Naive thymus-derived CD8-positive, alpha-beta T cell (primary cell): ENCODE measurements at regions of chr6 and their contacts with region 1.

Region 1: GRCh38 chr6:52284460-52285176 is at the start of gene MCM3:
- DNase-seq: peak; percentile 79 to 98 (median 95)
- ATAC-seq: peak; percentile 94
- H3K4me3 Mint-ChIP-seq: peak within 1 kb of the TSS in 6 of 10 donors; percentile 27 to 72 (median 62)
- H3K27ac Mint-ChIP-seq: peak within 1 kb of the TSS in 4 of 10 donors; percentile 19 to 65 (median 46)
- H3K4me1 Mint-ChIP-seq: peaks cover 12 to 46% (median 35%) of the 10 kb centered on the region in 4 donors
- H3K27me3 Mint-ChIP-seq: no peaks in the 10 kb centered on the region
- polyA plus RNA-seq, gene MCM3: 45.5 to 63.5 (median 57.7) TPM

Region 2: DNA sequence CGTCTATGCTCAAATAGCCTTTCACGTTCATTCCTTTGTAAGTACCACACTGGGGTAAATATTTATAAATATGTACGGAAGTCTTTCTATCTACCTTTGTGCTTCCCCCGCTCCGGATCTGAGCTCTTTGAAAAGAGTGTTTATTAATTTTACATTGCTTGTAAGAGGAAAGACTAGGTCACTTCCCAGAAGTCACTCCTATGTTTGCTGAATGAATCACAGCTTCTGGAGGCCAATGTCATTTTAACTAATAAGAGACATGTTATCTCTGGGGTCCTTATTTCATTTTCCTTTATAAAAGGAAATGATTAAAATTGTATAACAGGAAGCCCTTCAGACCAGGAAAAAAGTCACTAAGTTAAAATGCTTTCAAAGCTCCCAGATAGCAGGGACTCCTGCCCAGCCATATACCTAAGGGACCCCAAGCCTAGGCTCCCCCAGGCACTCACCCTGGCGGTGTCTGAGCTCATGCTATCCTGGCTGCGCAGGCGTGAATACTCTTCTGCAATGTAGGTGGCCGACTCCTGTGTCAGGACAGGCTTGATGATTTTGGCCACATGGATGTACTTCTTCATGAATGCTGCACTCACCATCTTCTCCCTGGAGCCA is 12.7 kb before region 1 on chr6:
- POLR2A ChIA-PET with region 1: no interaction called
- DNase-seq: no peak
- ATAC-seq: no peak
- H3K4me3 Mint-ChIP-seq: no peak overlapping the region
- H3K27ac Mint-ChIP-seq: peak overlapping the region in 2 of 10 donors; percentile 13 to 24
- H3K4me1 Mint-ChIP-seq: peaks cover 0 to 11% (median 4%) of the 10 kb centered on the region in 4 donors
- H3K27me3 Mint-ChIP-seq: no peaks in the 10 kb centered on the region

Region 3: DNA sequence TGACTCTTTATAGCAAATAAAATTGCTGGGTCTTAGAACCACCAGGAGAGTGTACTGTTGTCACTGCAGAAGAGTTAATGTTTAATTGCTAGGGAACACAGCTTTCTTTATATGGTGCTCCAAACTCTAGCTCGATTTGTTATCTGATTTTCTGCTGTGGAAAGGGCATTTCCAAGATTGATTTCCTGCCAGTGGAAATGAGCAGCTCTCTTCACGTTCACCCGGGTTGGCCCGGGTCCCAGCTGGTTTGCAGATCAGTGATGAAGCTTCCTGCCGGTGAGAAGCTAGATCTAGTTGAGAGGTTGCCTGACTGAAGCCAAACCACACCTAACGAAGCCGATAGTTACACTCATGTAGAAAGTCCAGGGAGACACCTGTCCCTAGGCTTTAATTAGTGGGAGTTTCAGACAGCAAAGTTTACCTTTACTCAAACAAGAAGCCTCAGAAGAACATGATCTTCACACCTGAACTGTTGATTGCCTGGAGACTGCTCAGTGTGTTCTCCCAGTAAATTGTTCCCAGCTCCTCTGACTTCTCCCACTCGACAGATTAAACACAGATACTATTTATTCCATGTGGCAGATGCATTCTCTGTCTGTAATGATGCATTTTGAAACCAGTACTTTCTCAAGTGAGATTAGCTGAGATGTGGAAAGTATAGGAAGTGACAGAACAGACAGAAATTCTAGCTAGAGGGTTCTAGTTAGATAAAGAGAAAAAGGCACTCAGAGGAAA is 105.2 kb after region 1 on chr6:
- POLR2A ChIA-PET with region 1: interaction called, 38 read pairs
- DNase-seq: peak; percentile 41 to 80 (median 65)
- ATAC-seq: peak; percentile 47 to 59
- H3K4me3 Mint-ChIP-seq: peak overlapping the region; percentile 71 to 93 (median 86)
- H3K27ac Mint-ChIP-seq: peak overlapping the region; percentile 93 to 100 (median 97)
- H3K4me1 Mint-ChIP-seq: peaks cover 51 to 93% (median 92%) of the 10 kb centered on the region in 4 donors
- H3K27me3 Mint-ChIP-seq: no peaks in the 10 kb centered on the region

Region 4: GRCh38 chr6:52399511-52400312 is 115.1 kb after region 1 on chr6:
- POLR2A ChIA-PET with region 1: interaction called, 108 read pairs
- DNase-seq: peak in 5 of 10 donors; percentile 39 to 64 (median 54)
- ATAC-seq: peak; percentile 24 to 27
- H3K4me3 Mint-ChIP-seq: peak overlapping the region; percentile 42 to 83 (median 68)
- H3K27ac Mint-ChIP-seq: peak overlapping the region; percentile 93 to 100 (median 96)
- H3K4me1 Mint-ChIP-seq: peaks cover 49 to 86% (median 72%) of the 10 kb centered on the region in 4 donors
- H3K27me3 Mint-ChIP-seq: no peaks in the 10 kb centered on the region

Region 5: GRCh38 chr6:52419809-52420670 is 135.4 kb after region 1 on chr6 and contains the start of gene EFHC1:
- POLR2A ChIA-PET with region 1: interaction called, 10 read pairs
- DNase-seq: peak; percentile 96 to 99 (median 98)
- ATAC-seq: peak; percentile 90
- H3K4me3 Mint-ChIP-seq: no peak within 1 kb of the TSS
- H3K27ac Mint-ChIP-seq: no peak within 1 kb of the TSS
- H3K4me1 Mint-ChIP-seq: peaks cover 6 to 34% (median 16%) of the 10 kb centered on the region in 4 donors
- H3K27me3 Mint-ChIP-seq: no peaks in the 10 kb centered on the region
- polyA plus RNA-seq, gene EFHC1: 2.5 to 5.1 (median 2.9) TPM